ENCODE measurements at regions of chrX and their contacts with region 1.

Region 1: GRCh38 chrX:109384699-109385098 is 97.2 kb downstream of the GUCY2F start:
- DNase-seq: peak in 1 of 2 experiments; percentile 7
- H3K4me3 ChIP-seq: no peak overlapping the region
- H3K4me3 Mint-ChIP-seq: no peak overlapping the region
- H3K27ac Mint-ChIP-seq: no peak overlapping the region
- H3K4me1 ChIP-seq: no peaks in the 10 kb centered on the region
- H3K4me1 Mint-ChIP-seq: peaks cover under 1% of the 10 kb centered on the region
- H3K27me3 ChIP-seq: no peaks in the 10 kb centered on the region
- H3K27me3 Mint-ChIP-seq: no peaks in the 10 kb centered on the region
- CTCF ChIP-seq: peak in 1 of 2 experiments; percentile 24

Region 2: GRCh38 chrX:108584617-108585211 is 800.0 kb before region 1 on chrX:
- CTCF ChIA-PET with region 1: no interaction called
- POLR2A ChIA-PET with region 1: no interaction called
- intact Hi-C with region 1: loop called (anchors 5 kb)
- DNase-seq: peak in 1 of 2 experiments; percentile 4
- H3K4me3 ChIP-seq: no peak overlapping the region
- H3K4me3 Mint-ChIP-seq: no peak overlapping the region
- H3K27ac Mint-ChIP-seq: no peak overlapping the region
- H3K4me1 ChIP-seq: no peaks in the 10 kb centered on the region
- H3K4me1 Mint-ChIP-seq: no peaks in the 10 kb centered on the region
- H3K27me3 ChIP-seq: no peaks in the 10 kb centered on the region
- H3K27me3 Mint-ChIP-seq: no peaks in the 10 kb centered on the region
- CTCF ChIP-seq: peak in 1 of 2 experiments; percentile 24

Region 3: DNA sequence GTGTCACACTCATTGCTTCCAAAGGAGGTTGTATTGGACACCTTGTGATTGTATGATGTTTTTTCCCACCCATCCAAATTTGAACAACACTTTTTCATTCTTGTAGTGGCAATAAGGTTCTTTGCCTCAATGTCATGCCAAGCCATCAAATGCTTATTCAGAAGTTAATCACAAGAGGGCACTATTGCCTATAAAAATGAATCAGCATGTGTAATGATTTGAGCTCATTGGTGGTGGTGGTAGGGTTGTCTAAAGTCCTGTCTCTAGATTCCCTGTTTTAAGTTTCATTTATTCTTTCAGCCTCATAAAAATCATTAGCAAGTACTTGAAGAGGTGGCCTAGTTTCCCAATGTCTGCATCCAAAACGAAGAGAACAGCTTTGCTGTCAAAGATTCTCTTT is 685.3 kb before region 1 on chrX:
- CTCF ChIA-PET with region 1: interaction called, 21 read pairs
- POLR2A ChIA-PET with region 1: no interaction called
- intact Hi-C with region 1: loop called (anchors 1 kb)
- DNase-seq: peak in 1 of 2 experiments; percentile 7
- H3K4me3 ChIP-seq: no peak overlapping the region
- H3K4me3 Mint-ChIP-seq: no peak overlapping the region
- H3K27ac Mint-ChIP-seq: no peak overlapping the region
- H3K4me1 ChIP-seq: no peaks in the 10 kb centered on the region
- H3K4me1 Mint-ChIP-seq: no peaks in the 10 kb centered on the region
- H3K27me3 ChIP-seq: no peaks in the 10 kb centered on the region
- H3K27me3 Mint-ChIP-seq: no peaks in the 10 kb centered on the region
- CTCF ChIP-seq: no peak

Region 4: GRCh38 chrX:108945883-108946523 is 438.7 kb before region 1 on chrX:
- CTCF ChIA-PET with region 1: no interaction called
- POLR2A ChIA-PET with region 1: no interaction called
- intact Hi-C with region 1: loop called (anchors 10 kb)
- DNase-seq: no peak
- H3K4me3 ChIP-seq: no peak overlapping the region
- H3K4me3 Mint-ChIP-seq: no peak overlapping the region
- H3K27ac Mint-ChIP-seq: no peak overlapping the region
- H3K4me1 ChIP-seq: no peaks in the 10 kb centered on the region
- H3K4me1 Mint-ChIP-seq: no peaks in the 10 kb centered on the region
- H3K27me3 ChIP-seq: no peaks in the 10 kb centered on the region
- H3K27me3 Mint-ChIP-seq: no peaks in the 10 kb centered on the region
- CTCF ChIP-seq: no peak

Region 5: GRCh38 chrX:109049902-109050301 is 334.8 kb before region 1 on chrX:
- CTCF ChIA-PET with region 1: no interaction called
- POLR2A ChIA-PET with region 1: no interaction called
- intact Hi-C with region 1: loop called (anchors 1 kb)
- DNase-seq: no peak
- H3K4me3 ChIP-seq: no peak overlapping the region
- H3K4me3 Mint-ChIP-seq: no peak overlapping the region
- H3K27ac Mint-ChIP-seq: no peak overlapping the region
- H3K4me1 ChIP-seq: no peaks in the 10 kb centered on the region
- H3K4me1 Mint-ChIP-seq: no peaks in the 10 kb centered on the region
- H3K27me3 ChIP-seq: no peaks in the 10 kb centered on the region
- H3K27me3 Mint-ChIP-seq: no peaks in the 10 kb centered on the region
- CTCF ChIP-seq: peak in 1 of 2 experiments; percentile 12

Region 6: GRCh38 chrX:109362101-109362500 is 22.6 kb before region 1 on chrX:
- CTCF ChIA-PET with region 1: no interaction called
- POLR2A ChIA-PET with region 1: no interaction called
- intact Hi-C with region 1: no loop called
- DNase-seq: no peak
- H3K4me3 ChIP-seq: no peak overlapping the region
- H3K4me3 Mint-ChIP-seq: no peak overlapping the region
- H3K27ac Mint-ChIP-seq: no peak overlapping the region
- H3K4me1 ChIP-seq: no peaks in the 10 kb centered on the region
- H3K4me1 Mint-ChIP-seq: no peaks in the 10 kb centered on the region
- H3K27me3 ChIP-seq: no peaks in the 10 kb centered on the region
- H3K27me3 Mint-ChIP-seq: peaks cover 2% of the 10 kb centered on the region
- CTCF ChIP-seq: no peak

Region 7: GRCh38 chrX:109373468-109373867 is 11.2 kb before region 1 on chrX:
- CTCF ChIA-PET with region 1: no interaction called
- POLR2A ChIA-PET with region 1: no interaction called
- intact Hi-C with region 1: no loop called
- DNase-seq: no peak
- H3K4me3 ChIP-seq: no peak overlapping the region
- H3K4me3 Mint-ChIP-seq: no peak overlapping the region
- H3K27ac Mint-ChIP-seq: no peak overlapping the region
- H3K4me1 ChIP-seq: no peaks in the 10 kb centered on the region
- H3K4me1 Mint-ChIP-seq: no peaks in the 10 kb centered on the region
- H3K27me3 ChIP-seq: no peaks in the 10 kb centered on the region
- H3K27me3 Mint-ChIP-seq: peaks cover 2% of the 10 kb centered on the region
- CTCF ChIP-seq: no peak

Region 8: DNA sequence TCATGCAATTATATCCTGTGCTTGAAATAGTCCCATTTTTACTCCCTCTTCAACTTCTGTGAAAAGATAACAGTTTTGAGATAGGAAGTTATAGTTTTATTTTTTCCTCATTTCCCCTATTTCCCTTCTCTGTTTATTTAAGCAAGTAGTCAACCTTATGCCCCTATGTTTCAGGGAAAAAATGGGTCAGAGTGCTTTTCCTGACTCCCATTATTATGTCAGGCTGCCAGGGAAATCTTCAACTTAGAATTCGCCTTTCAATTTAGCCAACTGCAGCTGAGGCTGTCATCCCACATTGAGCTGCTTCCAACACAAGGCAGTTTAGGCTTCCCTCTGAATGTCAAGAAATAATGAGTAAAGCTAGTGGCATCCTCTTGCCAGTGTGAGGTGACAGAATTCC is 194.2 kb after region 1 on chrX:
- CTCF ChIA-PET with region 1: no interaction called
- POLR2A ChIA-PET with region 1: no interaction called
- intact Hi-C with region 1: no loop called
- DNase-seq: no peak
- H3K4me3 ChIP-seq: no peak overlapping the region
- H3K4me3 Mint-ChIP-seq: no peak overlapping the region
- H3K27ac Mint-ChIP-seq: no peak overlapping the region
- H3K4me1 ChIP-seq: no peaks in the 10 kb centered on the region
- H3K4me1 Mint-ChIP-seq: no peaks in the 10 kb centered on the region
- H3K27me3 ChIP-seq: no peaks in the 10 kb centered on the region
- H3K27me3 Mint-ChIP-seq: no peaks in the 10 kb centered on the region
- CTCF ChIP-seq: no peak

Measured in Caco-2 (cell line).